Activated CD8-positive, alpha-beta memory T cell treated with anti-CD3 and anti-CD28 coated beads, Interleukin-2, amount 10 ng/mL, durations not matched to agents 7 days and 5 days (primary cell): ENCODE measurements at regions of chr22 and their contacts with region 1.

Region 1: GRCh38 chr22:32080904-32081303 is 37.8 kb downstream of the SLC5A1 start:
- DNase-seq: no peak
- ATAC-seq: peak; percentile 67
- H3K4me3 Mint-ChIP-seq: no peak overlapping the region
- H3K27ac Mint-ChIP-seq: no peak overlapping the region
- H3K4me1 Mint-ChIP-seq: peaks cover 5% of the 10 kb centered on the region
- H3K27me3 Mint-ChIP-seq: peaks cover 26% of the 10 kb centered on the region

Region 2: DNA sequence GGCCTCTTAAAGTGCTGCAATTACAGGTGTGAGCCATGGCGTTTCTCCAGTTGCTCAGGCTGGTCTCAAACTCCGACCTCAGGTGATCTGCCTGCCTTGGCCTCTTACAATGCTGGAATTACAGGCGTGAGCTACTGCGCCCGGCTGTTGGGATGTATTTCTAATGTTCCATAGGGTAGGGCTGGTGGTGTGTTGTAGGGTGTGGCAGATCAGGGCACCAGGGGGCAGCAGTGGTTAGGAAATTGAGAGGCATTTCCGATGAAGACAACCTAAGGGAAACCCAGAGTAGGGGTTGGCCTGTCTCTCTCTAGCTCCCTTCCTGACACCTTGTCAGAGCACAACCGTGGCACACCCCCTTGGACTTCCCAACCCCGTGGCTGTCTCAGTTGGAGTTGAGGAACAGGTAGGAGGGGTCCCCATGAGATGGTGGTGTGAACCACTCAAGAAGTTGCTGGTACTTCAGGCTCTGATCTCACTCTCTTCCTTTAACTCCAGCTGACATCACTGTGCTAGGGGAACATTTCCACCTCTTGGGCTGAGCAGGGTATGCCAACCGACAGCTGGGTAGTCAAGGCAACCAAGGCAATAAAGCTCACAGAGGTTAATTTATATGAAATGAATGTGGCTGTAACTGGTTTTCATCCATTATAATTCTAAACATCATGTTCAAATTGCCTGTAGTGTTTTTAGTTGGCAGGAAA is 103.6 kb before region 1 on chr22:
- CTCF ChIA-PET with region 1: interaction called, 34 read pairs
- DNase-seq: peak; percentile 86
- ATAC-seq: peak; percentile 96
- H3K4me3 Mint-ChIP-seq: no peak overlapping the region
- H3K27ac Mint-ChIP-seq: no peak overlapping the region
- H3K4me1 Mint-ChIP-seq: peaks cover 5% of the 10 kb centered on the region
- H3K27me3 Mint-ChIP-seq: peaks cover 14% of the 10 kb centered on the region